GM10248 (cell line): ENCODE measurements at regions of chr7 and their contacts with region 1.

Region 1: GRCh38 chr7:121366852-121367431 is 29.2 kb downstream of the FAM3C start:
- DNase-seq: peak; percentile 28
- CTCF ChIP-seq: peak; percentile 51

Region 2: GRCh38 chr7:121351679-121352078 is 15.3 kb before region 1 on chr7:
- CTCF ChIA-PET with region 1: interaction called, 12 read pairs
- POLR2A ChIA-PET with region 1: no interaction called
- DNase-seq: no peak
- CTCF ChIP-seq: no peak

Region 3: DNA sequence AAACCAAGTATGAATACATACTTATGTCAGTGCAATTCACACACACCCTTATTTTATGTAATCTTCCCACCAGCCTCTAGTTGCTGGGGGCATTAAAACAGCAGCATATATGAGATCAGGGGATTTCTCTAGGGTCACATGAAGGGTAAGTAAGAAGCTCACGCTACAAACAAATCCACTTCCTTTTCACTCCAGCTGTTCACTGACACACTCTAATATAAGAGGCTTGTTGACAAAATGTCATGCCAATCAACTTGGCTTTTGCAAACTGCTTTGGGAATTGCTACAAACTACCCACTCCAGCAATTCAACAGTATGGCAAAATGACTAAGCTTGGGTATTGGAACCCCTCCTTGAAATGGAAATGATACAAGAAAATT is 18.8 kb after region 1 on chr7:
- CTCF ChIA-PET with region 1: interaction called, 61 read pairs
- POLR2A ChIA-PET with region 1: no interaction called
- DNase-seq: peak; percentile 41
- CTCF ChIP-seq: no peak

Region 4: DNA sequence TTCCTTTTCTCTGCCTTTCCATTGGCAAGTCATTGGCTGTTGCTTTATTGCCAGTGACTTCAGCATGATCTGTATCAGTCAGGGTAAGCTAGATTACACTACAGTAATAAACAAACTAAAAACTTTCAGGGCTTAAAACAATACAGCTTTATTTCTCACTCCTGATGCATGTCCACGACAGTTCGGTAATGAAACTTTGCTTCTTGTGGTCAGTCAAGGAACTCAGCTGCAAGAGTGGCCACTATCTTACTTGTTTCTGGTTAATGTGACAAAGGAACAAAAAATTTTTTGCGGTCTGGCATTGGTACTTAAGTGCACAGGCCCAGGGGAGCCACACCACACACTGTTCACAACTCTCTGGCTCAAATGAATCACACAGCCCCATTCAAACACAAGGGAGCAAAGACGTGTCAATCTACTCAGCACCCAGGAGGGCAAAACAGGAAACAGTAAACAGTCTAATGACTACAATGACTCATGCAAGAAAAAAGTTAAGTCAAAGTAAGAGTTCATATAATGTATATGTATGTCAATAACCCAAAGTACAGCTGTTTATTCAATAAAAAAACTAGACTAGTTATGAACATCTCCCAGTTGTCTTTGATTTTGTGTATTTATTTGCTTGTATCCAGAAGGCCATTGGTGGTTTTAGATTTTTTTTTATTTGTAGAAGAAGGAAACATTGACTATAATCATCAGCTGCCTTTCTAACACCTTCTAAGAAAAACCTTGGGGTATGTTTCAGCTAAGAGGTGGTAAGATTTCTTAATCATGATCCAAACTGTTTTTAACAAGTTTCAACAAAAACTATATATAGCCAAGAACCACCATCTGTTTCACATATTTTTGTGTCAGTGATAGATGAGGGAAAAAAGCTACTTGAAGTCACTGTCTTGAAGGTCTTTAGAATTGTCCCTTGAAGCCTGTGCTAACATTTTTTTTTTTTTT is 163.6 kb after region 1 on chr7:
- CTCF ChIA-PET with region 1: interaction called, 12 read pairs
- POLR2A ChIA-PET with region 1: no interaction called
- DNase-seq: peak; percentile 54
- CTCF ChIP-seq: no peak

Region 5: DNA sequence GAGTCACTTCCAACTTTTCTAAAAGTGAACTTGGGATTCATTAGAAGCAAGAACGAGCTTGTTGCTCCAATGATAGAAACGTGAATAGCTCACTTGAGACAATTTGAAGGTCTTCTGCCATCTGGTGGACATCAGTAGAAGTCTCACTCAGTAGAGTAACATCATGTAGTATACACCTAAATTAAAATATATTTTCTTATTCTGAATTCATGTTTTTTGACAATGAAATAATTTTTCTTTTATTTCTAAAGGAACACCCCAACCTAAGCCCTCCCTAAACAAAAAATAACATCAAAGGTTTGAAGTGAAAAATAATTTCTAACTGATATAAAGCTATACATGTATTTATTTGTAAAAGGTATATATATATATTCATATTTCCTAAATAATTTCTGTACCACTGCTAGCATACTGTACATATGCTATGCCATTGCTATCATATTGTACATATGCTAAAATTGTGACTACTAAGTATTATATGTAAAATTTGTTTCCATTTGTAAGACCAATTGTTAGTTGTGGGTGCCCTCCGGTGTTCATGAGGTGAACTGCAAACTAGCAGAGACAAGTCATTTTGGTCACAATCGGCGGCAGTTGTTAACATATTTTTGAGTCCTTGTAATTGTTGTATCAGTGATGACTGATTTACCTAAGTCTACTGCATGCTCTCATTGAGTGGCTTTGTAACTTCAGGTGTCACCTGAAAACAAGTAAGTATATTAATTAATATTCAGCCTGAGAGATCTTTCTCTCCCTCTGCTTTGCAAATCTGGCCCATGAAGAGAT is 627.9 kb after region 1 on chr7:
- CTCF ChIA-PET with region 1: interaction called, 11 read pairs
- POLR2A ChIA-PET with region 1: no interaction called
- DNase-seq: peak; percentile 57
- CTCF ChIP-seq: peak; percentile 79